Ovary (tissue), 10 donors: ENCODE measurements at regions of chr4 and their contacts with region 1.

Region 1: DNA sequence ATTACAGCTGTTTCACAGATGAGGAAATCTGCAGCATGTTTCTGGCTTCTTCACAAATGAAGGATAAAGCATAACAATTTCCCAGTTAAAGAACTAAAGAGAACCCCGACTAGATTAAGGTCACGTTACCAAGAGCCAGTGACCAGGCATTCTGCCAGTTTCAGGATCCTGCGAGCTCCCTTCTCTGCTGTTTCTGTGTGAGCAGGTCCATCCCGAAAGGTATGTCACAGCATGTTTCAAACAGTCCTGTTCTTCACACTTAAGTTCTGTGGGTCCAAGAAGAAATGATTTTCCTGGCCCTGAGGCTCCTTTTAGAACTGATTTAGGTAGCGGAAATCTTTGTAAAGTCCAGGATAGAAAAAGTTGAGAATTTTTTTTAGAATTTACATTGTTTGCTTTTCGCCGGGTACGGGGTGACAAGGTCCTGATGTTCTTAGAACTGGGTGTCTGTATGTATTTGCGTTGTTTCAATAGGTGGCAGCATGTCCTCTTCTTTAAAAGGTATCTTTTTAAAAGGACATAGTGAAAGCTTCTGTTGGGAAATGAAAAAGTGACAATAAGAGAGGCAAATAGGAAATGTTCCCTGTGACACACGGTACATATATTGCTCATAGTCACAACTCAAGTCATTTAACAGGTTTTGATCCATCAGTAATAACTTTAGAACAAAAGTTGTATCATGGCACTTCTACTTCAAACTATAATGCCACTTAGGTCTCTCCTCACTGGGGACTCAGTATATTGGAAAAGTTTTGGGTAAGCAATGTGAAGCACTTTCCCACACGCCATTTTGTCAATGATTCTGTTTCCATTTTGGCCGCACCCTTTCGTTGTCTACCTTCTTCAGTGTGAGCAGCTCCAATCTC is 18.4 kb downstream of the IL21 start:
- DNase-seq: peak in 1 of 5 donors; percentile 17
- H3K4me3 ChIP-seq: no peak overlapping the region
- H3K27ac ChIP-seq: no peak overlapping the region
- H3K4me1 ChIP-seq: peaks cover 1% of the 10 kb centered on the region
- H3K27me3 ChIP-seq: no peaks in the 10 kb centered on the region
- CTCF ChIP-seq: no peak
- EP300 ChIP-seq: no peak
- POLR2A ChIP-seq: no peak

Region 2: GRCh38 chr4:122341906-122342305 is 260.6 kb before region 1 on chr4:
- intact Hi-C with region 1: no loop called
- DNase-seq: no peak
- H3K4me3 ChIP-seq: no peak overlapping the region
- H3K27ac ChIP-seq: no peak overlapping the region
- H3K4me1 ChIP-seq: no peaks in the 10 kb centered on the region
- H3K27me3 ChIP-seq: no peaks in the 10 kb centered on the region
- CTCF ChIP-seq: no peak
- EP300 ChIP-seq: no peak
- POLR2A ChIP-seq: no peak

Region 3: GRCh38 chr4:122469457-122469856 is 133.1 kb before region 1 on chr4:
- intact Hi-C with region 1: no loop called
- DNase-seq: no peak
- H3K4me3 ChIP-seq: no peak overlapping the region
- H3K27ac ChIP-seq: no peak overlapping the region
- H3K4me1 ChIP-seq: no peaks in the 10 kb centered on the region
- H3K27me3 ChIP-seq: no peaks in the 10 kb centered on the region
- CTCF ChIP-seq: no peak
- EP300 ChIP-seq: no peak
- POLR2A ChIP-seq: no peak

Region 4: GRCh38 chr4:122716825-122717448 is 114.4 kb after region 1 on chr4:
- intact Hi-C with region 1: loop called in 1 of 4 experiments (anchors 10 kb)
- DNase-seq: peak in 4 of 5 donors; percentile 23 to 53 (median 47)
- H3K4me3 ChIP-seq: no peak overlapping the region
- H3K27ac ChIP-seq: no peak overlapping the region
- H3K4me1 ChIP-seq: peaks cover 2% of the 10 kb centered on the region
- H3K27me3 ChIP-seq: no peaks in the 10 kb centered on the region
- CTCF ChIP-seq: no peak
- EP300 ChIP-seq: no peak
- POLR2A ChIP-seq: no peak

Region 5: GRCh38 chr4:122930862-122931261 is 328.4 kb after region 1 on chr4:
- intact Hi-C with region 1: loop called in 1 of 4 experiments (anchors 5 kb)
- DNase-seq: no peak
- H3K4me3 ChIP-seq: no peak overlapping the region
- H3K27ac ChIP-seq: no peak overlapping the region
- H3K4me1 ChIP-seq: no peaks in the 10 kb centered on the region
- H3K27me3 ChIP-seq: no peaks in the 10 kb centered on the region
- CTCF ChIP-seq: peak in 2 of 3 donors; percentile 27 to 52
- EP300 ChIP-seq: no peak
- POLR2A ChIP-seq: no peak